ENCODE measurements at regions of chr2 and their contacts with region 1.

Region 1: GRCh38 chr2:168149150-168149974 is 98.0 kb downstream of the STK39 start:
- DNase-seq: no peak
- ATAC-seq: no peak
- H3K4me3 ChIP-seq: no peak overlapping the region
- H3K27ac ChIP-seq: no peak overlapping the region
- H3K4me1 ChIP-seq: peaks cover 0 to 70% (median 39%) of the 10 kb centered on the region in 12 donors
- H3K27me3 ChIP-seq: no peaks in the 10 kb centered on the region
- CTCF ChIP-seq: no peak
- POLR2A ChIP-seq: no peak

Region 2: DNA sequence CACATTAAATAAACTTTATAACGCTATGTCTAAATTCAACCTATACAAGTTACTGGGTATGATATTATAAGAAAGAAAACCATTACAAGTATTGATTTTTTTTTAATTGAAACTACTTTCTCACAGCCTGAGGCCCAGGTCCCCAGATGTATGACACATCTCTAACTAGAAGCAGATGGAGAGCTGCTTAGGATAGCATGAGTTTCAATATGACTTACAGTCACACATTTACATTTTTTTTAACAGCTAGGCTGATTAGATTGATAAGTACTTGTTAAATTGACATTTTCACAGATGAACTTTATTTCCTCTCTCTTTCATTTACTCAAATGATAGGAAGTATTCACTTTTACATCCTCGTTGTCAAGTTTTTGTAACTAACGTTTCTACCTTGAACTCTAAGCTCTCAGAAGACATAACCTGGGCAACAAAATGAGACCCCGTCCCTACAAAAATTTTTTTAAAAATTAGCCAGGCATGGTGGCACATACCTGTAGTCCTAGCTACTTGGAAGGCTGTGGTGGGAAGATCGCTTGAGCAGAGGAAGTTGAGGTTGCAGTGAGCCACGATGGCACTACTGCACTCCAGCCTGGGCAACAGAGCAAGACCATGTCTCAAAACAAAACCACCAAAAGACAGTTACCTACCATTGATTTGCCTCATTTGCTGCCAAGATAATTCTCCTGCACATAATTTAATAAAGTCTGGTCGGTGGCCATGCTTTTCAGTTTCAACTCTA is 45.6 kb after region 1 on chr2:
- intact Hi-C with region 1: loop called in 1 of 10 experiments (anchors 10 kb)
- DNase-seq: no peak
- ATAC-seq: no peak
- H3K4me3 ChIP-seq: no peak overlapping the region
- H3K27ac ChIP-seq: peak overlapping the region in 1 of 12 donors; percentile 11
- H3K4me1 ChIP-seq: peaks cover 0 to 53% (median 22%) of the 10 kb centered on the region in 12 donors
- H3K27me3 ChIP-seq: no peaks in the 10 kb centered on the region
- CTCF ChIP-seq: no peak
- POLR2A ChIP-seq: no peak

Region 3: DNA sequence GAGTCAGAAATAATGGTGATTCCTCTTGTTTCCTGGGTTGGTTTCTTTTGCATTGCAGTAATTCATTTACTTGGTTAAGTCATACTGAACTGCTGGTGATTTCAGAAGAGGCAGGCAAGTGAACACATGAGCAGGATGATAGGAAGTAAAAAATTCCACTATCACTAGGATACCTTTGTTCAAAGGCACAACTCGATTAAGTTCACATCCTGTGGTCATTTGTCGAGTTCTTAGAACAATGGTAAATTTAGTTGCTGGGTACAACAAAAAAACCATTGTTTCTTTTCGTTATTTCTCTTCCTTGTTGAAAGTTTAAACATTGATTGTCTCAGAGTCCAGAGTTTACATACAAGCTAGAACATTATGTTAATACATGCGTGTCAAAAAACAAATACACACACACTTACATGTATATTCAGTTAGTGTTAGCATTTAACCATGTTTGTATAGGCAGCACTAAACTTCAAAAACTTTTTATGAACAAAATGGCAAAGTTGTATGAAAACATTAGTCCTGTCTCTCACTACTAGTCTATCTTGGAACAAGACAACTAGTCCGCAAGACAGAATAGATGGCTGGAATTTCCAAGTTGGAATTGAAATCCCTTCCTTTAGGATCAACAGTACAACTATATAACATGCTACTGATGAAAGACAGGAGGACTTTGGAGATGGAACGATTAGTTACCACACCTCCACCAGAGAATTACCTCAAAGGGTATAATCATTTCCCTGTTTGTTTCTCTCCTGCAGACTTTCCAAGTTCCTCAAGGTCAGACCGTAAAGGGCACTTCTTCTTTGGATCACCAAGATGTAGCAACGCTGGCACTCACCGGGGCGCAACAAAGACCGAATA is 71.8 kb after region 1 on chr2:
- intact Hi-C with region 1: loop called in 1 of 10 experiments (anchors 5 kb)
- DNase-seq: no peak
- ATAC-seq: peak in 2 of 4 donors; percentile 12 to 18
- H3K4me3 ChIP-seq: no peak overlapping the region
- H3K27ac ChIP-seq: peak overlapping the region in 9 of 12 donors; percentile 22 to 74 (median 39)
- H3K4me1 ChIP-seq: peaks cover 0 to 37% (median 17%) of the 10 kb centered on the region in 12 donors
- H3K27me3 ChIP-seq: no peaks in the 10 kb centered on the region
- CTCF ChIP-seq: no peak
- POLR2A ChIP-seq: no peak

Region 4: DNA sequence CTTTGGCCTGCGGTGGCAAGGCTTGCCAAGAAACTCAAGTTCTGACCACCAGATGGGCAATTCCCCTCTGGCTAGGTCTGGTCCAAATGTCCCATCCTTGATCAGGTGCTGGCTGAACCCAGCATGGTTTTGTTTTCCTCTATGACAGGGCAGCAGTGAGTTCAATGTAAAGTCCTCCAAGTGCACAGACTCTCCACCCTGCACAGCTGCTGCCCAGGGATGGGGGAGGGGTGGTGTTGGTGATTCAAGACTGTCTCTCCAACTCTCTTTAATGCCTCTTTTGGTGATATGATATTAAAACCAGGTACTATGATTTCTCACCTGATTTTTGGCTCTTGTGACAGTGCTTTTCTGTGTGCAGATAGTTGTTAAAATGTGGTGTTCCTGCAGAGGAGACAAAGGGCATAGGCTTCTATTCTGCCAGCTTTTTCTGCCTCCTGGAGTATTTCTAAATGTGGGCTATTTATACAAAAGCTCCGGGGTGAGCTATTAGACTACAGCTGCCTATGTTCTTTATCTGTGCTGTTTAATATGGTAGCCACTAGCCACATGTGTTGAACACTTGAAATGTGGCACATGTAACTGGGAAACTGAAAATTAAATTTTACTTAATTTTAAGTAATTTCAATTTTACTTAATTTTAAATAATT is 162.0 kb after region 1 on chr2:
- intact Hi-C with region 1: loop called in 1 of 10 experiments (anchors 10 kb)
- DNase-seq: no peak
- ATAC-seq: peak in 1 of 4 donors; percentile 58
- H3K4me3 ChIP-seq: no peak overlapping the region
- H3K27ac ChIP-seq: no peak overlapping the region
- H3K4me1 ChIP-seq: peaks cover 0 to 30% (median 11%) of the 10 kb centered on the region in 12 donors
- H3K27me3 ChIP-seq: no peaks in the 10 kb centered on the region
- CTCF ChIP-seq: no peak
- POLR2A ChIP-seq: no peak

Region 5: GRCh38 chr2:168336864-168337263 is 187.5 kb after region 1 on chr2:
- intact Hi-C with region 1: loop called in 1 of 10 experiments (anchors 10 kb)
- DNase-seq: peak in 1 of 5 donors; percentile 29
- ATAC-seq: peak in 3 of 4 donors; percentile 59 to 76 (median 64)
- H3K4me3 ChIP-seq: no peak overlapping the region
- H3K27ac ChIP-seq: no peak overlapping the region
- H3K4me1 ChIP-seq: no peaks in the 10 kb centered on the region
- H3K27me3 ChIP-seq: peaks cover 0 to 2% (median 0%) of the 10 kb centered on the region in 9 donors
- CTCF ChIP-seq: peak in 10 of 12 donors; percentile 22 to 44 (median 33)
- POLR2A ChIP-seq: no peak